Activated CD4-positive, alpha-beta memory T cell treated with anti-CD3 and anti-CD28 coated beads for 36 hours (primary cell): ENCODE measurements at regions of chr10 and their contacts with region 1.

Region 1: DNA sequence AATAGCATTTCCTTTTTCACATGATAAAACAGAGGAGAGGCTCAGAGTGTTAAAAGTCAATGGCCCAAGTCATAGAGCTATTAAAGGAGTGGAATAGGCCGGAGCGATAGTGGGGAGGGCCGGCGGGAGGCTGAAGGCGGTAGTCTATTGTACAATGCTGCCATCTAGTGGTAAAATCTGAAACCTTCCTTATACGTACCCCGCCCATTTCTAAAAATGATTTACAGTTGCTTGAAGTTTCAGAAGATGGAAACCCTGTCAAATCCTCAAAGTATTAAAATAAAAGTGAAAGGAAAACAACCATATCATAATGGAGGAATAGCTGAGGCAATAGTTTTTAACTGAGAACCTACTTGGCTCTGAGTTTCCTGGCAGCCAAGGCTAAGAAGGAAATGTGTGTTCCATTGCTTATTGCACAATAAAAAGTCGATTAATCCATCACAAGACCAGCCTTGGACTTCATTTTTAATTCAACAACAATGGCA is 209.1 kb downstream of the CCSER2 start:
- DNase-seq: peak; percentile 48
- H3K4me3 Mint-ChIP-seq: no peak overlapping the region
- H3K27ac Mint-ChIP-seq: no peak overlapping the region
- H3K4me1 Mint-ChIP-seq: peaks cover 31% of the 10 kb centered on the region
- H3K27me3 Mint-ChIP-seq: peaks cover 16% of the 10 kb centered on the region

Region 2: GRCh38 chr10:84139126-84140035 is 398.1 kb before region 1 on chr10 and contains the start of gene GHITM:
- CTCF ChIA-PET with region 1: interaction called, 6 read pairs
- POLR2A ChIA-PET with region 1: no interaction called
- intact Hi-C with region 1: loop called (anchors 2 kb)
- DNase-seq: peak; percentile 100
- H3K4me3 Mint-ChIP-seq: peak within 1 kb of the TSS; percentile 97
- H3K27ac Mint-ChIP-seq: peak within 1 kb of the TSS; percentile 95
- H3K4me1 Mint-ChIP-seq: peaks cover 34% of the 10 kb centered on the region
- H3K27me3 Mint-ChIP-seq: no peaks in the 10 kb centered on the region
- total RNA-seq, gene GHITM: 192 to 197 TPM

Region 3: DNA sequence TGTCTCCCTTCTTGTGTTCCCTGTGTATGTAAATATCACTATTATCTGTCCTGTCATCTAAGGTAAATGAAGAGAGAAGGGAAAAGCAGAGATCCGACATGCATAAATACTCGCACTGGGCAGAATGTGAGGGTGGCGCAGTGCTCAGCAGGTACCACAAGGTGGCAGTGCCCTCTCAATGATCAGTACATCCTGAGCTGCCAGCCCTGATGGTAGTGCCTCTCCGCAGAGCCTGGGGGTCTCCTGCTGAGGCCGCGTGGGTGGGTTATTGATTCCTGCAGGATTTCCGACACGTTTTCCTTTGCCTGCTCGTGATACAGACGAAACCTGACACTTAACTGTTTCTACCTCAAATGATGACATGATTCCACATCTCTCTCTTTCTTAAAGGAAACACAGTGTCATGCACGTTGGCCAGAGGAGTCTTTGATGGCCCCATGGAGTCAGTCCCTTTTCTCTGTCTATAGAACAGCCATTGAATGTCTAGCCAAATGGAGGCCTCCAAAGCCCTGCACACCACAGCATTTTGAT is 272.8 kb before region 1 on chr10:
- CTCF ChIA-PET with region 1: interaction called, 336 read pairs
- POLR2A ChIA-PET with region 1: no interaction called
- intact Hi-C with region 1: loop called (anchors 1 kb)
- DNase-seq: peak; percentile 80
- H3K4me3 Mint-ChIP-seq: no peak overlapping the region
- H3K27ac Mint-ChIP-seq: no peak overlapping the region
- H3K4me1 Mint-ChIP-seq: peaks cover 28% of the 10 kb centered on the region
- H3K27me3 Mint-ChIP-seq: peaks cover 17% of the 10 kb centered on the region

Region 4: DNA sequence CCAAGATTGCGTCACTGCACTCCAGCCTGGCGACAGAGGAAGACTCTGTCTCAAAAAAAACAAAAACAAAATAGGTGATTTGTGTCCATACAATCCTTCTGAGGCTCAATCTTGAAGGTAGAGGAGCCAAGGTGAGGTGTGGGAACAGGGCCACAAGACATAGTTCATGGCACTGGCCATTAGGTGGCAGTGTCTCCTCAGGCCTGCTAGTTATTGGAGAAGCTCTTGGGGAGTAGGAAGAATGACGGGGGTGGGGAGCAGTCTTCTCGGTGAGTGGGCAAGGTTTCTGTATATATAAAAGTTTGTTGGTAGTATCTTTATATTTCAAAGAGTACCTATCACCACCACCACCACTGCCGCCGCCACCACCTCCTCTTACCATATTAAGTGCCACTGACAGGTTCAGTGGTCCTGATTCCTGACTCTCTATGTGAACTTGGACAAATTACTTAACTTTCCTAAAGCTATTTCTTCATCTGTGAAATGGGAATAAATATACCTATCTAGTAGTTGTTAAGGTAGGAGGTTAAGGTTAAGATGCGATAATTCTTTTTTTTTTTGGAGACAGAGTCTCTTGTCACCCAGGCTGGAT is 185.1 kb before region 1 on chr10:
- CTCF ChIA-PET with region 1: interaction called, 78 read pairs
- POLR2A ChIA-PET with region 1: interaction called, 5 read pairs
- intact Hi-C with region 1: loop called (anchors 1 kb)
- DNase-seq: peak; percentile 81
- H3K4me3 Mint-ChIP-seq: no peak overlapping the region
- H3K27ac Mint-ChIP-seq: peak overlapping the region; percentile 28
- H3K4me1 Mint-ChIP-seq: peaks cover 71% of the 10 kb centered on the region
- H3K27me3 Mint-ChIP-seq: no peaks in the 10 kb centered on the region

Region 5: GRCh38 chr10:84429926-84430520 is 107.5 kb before region 1 on chr10:
- CTCF ChIA-PET with region 1: interaction called, 90 read pairs
- POLR2A ChIA-PET with region 1: no interaction called
- intact Hi-C with region 1: loop called (anchors 1 kb)
- DNase-seq: peak; percentile 76
- H3K4me3 Mint-ChIP-seq: no peak overlapping the region
- H3K27ac Mint-ChIP-seq: no peak overlapping the region
- H3K4me1 Mint-ChIP-seq: peaks cover 31% of the 10 kb centered on the region
- H3K27me3 Mint-ChIP-seq: no peaks in the 10 kb centered on the region

Region 6: DNA sequence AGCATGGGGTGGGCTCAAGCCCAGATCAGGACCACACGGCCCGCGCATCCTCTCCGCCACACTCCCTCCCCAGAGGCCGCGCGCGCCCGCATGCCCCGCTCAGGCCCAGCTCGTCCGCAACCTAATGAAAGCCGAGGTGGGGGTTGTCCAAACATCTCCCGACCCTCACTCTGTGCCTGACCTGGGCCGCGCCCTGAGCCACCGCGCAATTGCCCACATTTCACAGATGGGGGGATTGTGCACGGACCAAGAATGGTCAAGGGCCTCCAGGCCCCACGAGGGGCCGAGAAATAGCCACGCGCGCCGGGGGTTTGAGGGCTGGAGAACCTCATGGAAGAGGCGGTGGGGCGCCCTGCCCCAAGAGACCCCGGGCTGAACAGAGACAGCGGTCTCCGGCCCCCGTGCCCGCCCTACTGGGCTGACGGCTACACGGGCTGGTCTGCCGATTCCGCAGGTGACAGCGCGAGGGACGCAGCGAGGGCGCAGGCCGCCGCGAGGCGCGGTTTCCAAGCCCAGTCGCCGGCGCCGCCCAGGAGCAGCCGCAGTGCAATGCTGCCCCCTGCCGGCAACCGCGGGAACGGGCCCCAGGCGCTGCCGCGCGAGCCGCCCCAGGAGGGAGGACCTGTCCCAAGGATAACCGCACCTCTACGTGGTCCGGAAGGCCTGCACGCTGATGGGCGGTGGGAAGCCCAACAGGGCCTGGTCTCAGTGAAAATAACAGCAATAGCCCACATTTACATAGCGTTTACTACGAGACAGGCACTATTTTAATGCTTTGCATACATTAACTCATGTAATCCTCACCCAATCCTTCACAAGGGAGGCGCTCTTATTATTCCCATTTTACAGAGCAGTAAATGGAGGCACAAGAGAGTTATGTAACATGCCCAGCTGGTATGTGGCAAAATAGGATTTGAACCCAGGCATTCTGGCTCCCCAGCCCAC is 1839.6 kb after region 1 on chr10:
- CTCF ChIA-PET with region 1: interaction called, 12 read pairs
- POLR2A ChIA-PET with region 1: no interaction called
- intact Hi-C with region 1: loop called (anchors 5 kb)
- DNase-seq: peak; percentile 88
- H3K4me3 Mint-ChIP-seq: no peak overlapping the region
- H3K27ac Mint-ChIP-seq: no peak overlapping the region
- H3K4me1 Mint-ChIP-seq: peaks cover 1% of the 10 kb centered on the region
- H3K27me3 Mint-ChIP-seq: peaks cover 15% of the 10 kb centered on the region